ENCODE measurements at regions of chr20 and their contacts with region 1.

Region 1: GRCh38 chr20:42697962-42698361 is 491.7 kb downstream of the PTPRT start:
- DNase-seq: no peak
- ATAC-seq: no peak
- H3K4me3 ChIP-seq: no peak overlapping the region
- H3K27ac ChIP-seq: no peak overlapping the region
- H3K4me1 ChIP-seq: no peaks in the 10 kb centered on the region
- H3K27me3 ChIP-seq: no peaks in the 10 kb centered on the region
- CTCF ChIP-seq: no peak

Region 2: GRCh38 chr20:41746634-41747033 is 951.3 kb before region 1 on chr20:
- intact Hi-C with region 1: no loop called
- DNase-seq: no peak
- ATAC-seq: no peak
- H3K4me3 ChIP-seq: no peak overlapping the region
- H3K27ac ChIP-seq: no peak overlapping the region
- H3K4me1 ChIP-seq: no peaks in the 10 kb centered on the region
- H3K27me3 ChIP-seq: peaks cover 3 to 6% (median 3%) of the 10 kb centered on the region in 3 donors
- CTCF ChIP-seq: no peak

Region 3: DNA sequence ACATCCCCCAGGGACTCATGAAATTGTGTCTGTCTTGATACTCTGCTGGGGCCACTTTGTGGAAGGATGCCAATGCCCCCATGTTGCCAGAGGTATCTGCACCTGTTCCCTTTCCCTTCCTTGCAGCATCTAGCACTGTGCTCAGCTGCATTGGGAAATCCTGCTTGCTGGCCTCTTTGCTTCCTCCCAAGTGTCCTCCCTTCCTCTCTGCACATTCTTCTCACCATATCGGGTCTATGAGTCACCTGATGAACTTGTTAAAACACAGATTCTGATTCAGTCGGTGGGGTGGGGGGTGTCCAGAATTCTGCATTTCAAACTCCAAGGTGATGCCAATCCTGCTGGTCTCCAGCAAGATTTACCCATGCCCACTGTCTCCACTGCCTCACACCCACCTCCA is 24.0 kb after region 1 on chr20:
- intact Hi-C with region 1: no loop called
- DNase-seq: no peak
- ATAC-seq: no peak
- H3K4me3 ChIP-seq: no peak overlapping the region
- H3K27ac ChIP-seq: no peak overlapping the region
- H3K4me1 ChIP-seq: no peaks in the 10 kb centered on the region
- H3K27me3 ChIP-seq: no peaks in the 10 kb centered on the region
- CTCF ChIP-seq: no peak

Region 4: GRCh38 chr20:42749556-42749955 is 51.6 kb after region 1 on chr20:
- intact Hi-C with region 1: loop called in 1 of 2 experiments (anchors 5 kb)
- DNase-seq: no peak
- ATAC-seq: no peak
- H3K4me3 ChIP-seq: no peak overlapping the region
- H3K27ac ChIP-seq: no peak overlapping the region
- H3K4me1 ChIP-seq: no peaks in the 10 kb centered on the region
- H3K27me3 ChIP-seq: no peaks in the 10 kb centered on the region
- CTCF ChIP-seq: no peak